Left colon (tissue), 2 donors: ENCODE measurements at regions of chr18 and their contacts with region 1.

Region 1: DNA sequence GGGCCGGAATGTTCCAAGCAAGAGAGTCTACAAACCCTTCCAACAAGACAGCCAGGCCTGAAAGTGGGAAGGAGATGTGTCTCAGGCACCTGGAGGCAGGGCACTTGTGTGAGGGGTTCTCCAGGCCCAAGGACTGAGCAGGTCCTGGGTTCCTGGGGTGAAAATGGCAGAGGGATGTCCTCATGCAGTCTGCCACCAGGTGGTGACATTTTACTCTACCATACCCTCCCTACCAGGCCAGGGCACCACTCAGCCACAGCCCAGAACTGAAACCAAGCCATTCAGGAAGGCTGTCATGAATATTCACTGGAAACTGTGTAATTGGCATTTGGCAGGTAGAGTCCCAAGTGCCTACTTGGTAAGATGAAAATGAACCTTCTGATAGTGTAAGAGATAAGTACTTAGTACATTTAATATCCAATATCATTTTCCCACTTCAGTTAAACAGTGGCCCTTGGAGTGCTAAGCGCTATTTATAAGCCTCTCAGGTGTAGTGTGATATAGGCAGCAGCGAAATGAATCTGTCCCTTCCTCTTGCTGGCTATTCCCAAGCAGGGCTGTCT is 185.1 kb downstream of the MYO5B start:
- DNase-seq: peak; percentile 55 to 69
- ATAC-seq: peak; percentile 98

Region 2: GRCh38 chr18:50209311-50209710 is 199.5 kb after region 1 on chr18:
- intact Hi-C with region 1: loop called in 1 of 2 experiments (anchors 5 kb)
- DNase-seq: no peak
- ATAC-seq: no peak